ENCODE measurements at regions of chr19 and their contacts with region 1.

Region 1: DNA sequence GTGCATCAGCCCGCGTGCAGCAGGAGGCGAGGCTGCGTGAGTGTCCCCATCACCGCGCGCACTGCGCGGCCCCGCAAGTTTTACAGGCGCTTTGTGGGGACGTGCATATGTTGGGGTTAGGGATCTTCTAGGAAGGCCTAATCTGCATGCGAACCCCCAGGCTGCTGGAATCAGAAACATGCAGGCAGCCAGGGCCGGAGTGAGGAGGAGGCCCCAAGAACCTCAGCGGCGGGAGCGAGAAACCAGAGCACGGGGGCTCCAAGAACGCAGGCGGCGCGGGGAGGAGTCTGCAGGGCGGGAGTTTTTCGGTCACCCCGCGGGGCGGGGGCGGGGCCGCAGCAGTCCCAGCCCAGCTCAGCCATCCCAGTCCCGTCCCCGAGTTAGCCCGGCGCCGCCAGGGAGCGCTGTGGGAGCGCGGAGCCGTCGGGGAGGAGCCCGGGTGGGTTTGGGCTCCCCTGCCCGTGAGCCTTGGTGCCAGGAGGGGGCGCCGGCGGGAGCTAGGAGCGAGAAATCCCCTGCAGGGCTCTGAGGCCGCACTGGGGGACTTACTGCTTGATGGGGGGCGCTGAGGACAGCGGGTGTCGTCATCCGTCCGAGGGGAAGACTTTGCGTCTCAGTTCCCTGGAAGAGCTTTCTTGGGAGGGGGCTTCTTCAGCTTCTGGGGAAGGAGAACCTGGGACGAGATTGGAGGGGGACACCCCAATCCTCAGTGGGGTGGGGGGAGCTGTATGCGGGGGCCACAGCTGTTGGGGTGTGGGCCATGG is 933 bp upstream of the NRTN start:
- DNase-seq: peak; percentile 92 to 94 (median 93)
- ATAC-seq: peak; percentile 73 to 86 (median 79)
- H3K4me3 ChIP-seq: peak overlapping the region; percentile 24 to 44 (median 32)
- H3K27ac ChIP-seq: no peak overlapping the region
- H3K4me1 ChIP-seq: peaks cover 0 to 42% (median 19%) of the 10 kb centered on the region in 4 donors
- H3K27me3 ChIP-seq: no peaks in the 10 kb centered on the region
- CTCF ChIP-seq: peak; percentile 94 to 98 (median 96)
- POLR2A ChIP-seq: no peak

Region 2: DNA sequence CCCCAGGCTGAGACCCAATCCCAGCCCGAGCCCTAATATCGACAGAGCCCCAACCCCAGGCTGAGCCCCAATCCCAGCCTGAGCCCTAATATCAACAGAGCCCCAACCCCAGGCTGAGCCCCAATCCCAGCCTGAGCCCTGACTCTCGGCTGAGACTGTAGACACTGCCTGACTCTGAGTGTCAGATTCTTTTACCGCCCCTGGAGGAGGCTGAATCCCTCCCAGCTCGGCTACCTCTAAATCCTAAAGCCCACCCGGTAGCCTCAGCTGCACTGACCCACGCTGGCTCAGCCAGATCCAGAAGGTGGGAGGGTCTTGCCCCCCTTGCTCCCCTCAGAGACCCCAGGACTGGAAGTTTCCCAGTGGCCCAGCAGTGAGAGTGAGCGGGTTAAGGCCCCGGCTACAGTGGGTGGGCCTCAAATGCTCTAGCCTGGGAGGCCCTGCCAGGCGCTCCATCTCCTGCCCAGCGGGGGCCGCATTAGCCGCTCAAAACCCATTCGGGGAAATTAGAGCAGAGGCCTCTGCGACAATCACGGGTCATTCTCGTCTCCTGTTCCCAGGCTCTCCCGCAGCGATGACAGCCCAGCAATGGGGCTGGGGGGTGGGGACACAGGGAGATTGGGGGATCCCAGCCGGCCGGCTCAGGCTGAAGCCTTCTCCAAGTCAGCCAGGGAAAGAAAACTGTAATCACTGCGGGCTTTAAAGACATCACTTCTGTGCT is 304.9 kb before region 1 on chr19:
- intact Hi-C with region 1: no loop called
- DNase-seq: no peak
- ATAC-seq: no peak
- H3K4me3 ChIP-seq: no peak overlapping the region
- H3K27ac ChIP-seq: no peak overlapping the region
- H3K4me1 ChIP-seq: no peaks in the 10 kb centered on the region
- H3K27me3 ChIP-seq: no peaks in the 10 kb centered on the region
- CTCF ChIP-seq: no peak
- POLR2A ChIP-seq: no peak

Region 3: GRCh38 chr19:5864725-5865486 is 61.0 kb after region 1 on chr19:
- intact Hi-C with region 1: no loop called
- DNase-seq: no peak
- ATAC-seq: no peak
- H3K4me3 ChIP-seq: no peak overlapping the region
- H3K27ac ChIP-seq: no peak overlapping the region
- H3K4me1 ChIP-seq: peaks cover 0 to 5% (median 0%) of the 10 kb centered on the region in 4 donors
- H3K27me3 ChIP-seq: no peaks in the 10 kb centered on the region
- CTCF ChIP-seq: peak in 1 of 4 donors; percentile 22
- POLR2A ChIP-seq: no peak

Region 4: DNA sequence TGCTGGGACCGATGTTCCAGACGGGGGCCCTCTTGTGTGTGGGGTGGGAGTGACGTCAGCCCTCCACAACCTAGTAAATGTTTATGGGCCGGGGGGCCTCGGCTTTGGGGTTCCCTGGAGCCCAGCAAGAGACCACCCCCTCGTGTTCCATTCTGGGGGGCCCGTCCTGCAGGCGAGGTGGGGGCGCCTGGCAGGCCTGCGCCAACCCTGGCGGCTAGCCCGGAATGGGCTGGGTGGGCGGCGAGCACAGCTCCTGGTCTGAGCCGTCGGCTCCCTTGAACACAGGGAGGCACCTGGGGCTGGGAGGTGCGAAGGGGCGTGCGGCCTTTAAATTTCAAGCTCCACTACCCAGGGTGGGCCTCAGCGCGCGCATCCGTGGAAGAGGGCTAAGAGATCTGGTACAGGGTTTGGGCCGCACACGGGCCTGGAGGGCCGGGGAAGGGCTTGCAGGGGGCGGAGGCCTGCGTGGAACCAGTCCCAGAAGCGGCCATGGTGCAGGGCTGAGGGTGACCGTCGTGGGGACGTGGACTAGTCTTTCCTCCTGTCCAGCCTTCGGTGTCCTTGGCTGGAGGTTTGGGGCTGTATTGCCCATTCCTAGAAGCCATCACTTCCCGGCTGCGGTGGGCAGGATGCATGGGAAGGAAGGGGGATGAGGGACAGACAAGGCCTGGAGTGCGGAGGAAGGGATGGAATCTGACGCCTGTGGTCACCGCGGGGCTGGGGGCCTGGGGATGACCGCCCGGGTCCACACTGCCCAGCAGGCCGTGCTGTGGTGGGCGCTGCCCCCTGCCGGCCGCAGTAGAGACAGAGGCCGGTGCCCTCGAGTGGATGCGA is 88.2 kb after region 1 on chr19:
- intact Hi-C with region 1: loop called in 1 of 2 experiments (anchors 5 kb)
- DNase-seq: peak in 1 of 3 donors; percentile 57
- ATAC-seq: peak; percentile 78 to 89 (median 84)
- H3K4me3 ChIP-seq: no peak overlapping the region
- H3K27ac ChIP-seq: no peak overlapping the region
- H3K4me1 ChIP-seq: peaks cover 0 to 8% (median 2%) of the 10 kb centered on the region in 4 donors
- H3K27me3 ChIP-seq: no peaks in the 10 kb centered on the region
- CTCF ChIP-seq: peak; percentile 76 to 88 (median 83)
- POLR2A ChIP-seq: no peak

Region 5: DNA sequence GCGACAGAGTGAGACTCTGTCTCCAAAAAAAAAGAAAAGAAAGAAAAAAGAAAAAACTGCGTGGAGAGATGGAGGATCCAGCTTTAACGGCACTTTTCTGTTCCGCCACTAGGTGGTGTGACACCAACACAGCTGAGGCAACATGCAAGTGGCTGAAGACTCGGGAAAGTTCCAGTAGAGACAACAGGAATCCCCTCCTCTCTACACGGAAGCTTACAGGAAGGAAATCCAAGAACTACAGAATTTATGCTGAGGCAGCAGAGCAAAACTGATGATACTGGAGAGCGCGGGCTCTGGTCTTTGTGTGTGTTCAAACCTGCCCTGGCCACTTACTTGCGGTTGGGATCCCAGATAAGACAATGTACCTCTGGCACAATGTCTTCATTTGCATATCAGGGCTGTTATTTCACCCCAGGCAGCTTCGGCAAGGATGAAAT is 164.1 kb after region 1 on chr19:
- intact Hi-C with region 1: loop called in 1 of 2 experiments (anchors 10 kb)
- DNase-seq: peak in 1 of 3 donors; percentile 76
- ATAC-seq: peak; percentile 82 to 94 (median 86)
- H3K4me3 ChIP-seq: no peak overlapping the region
- H3K27ac ChIP-seq: peak overlapping the region; percentile 73 to 98 (median 93)
- H3K4me1 ChIP-seq: peaks cover 0 to 31% (median 12%) of the 10 kb centered on the region in 4 donors
- H3K27me3 ChIP-seq: no peaks in the 10 kb centered on the region
- CTCF ChIP-seq: peak; percentile 81 to 94 (median 91)
- POLR2A ChIP-seq: no peak

Measured in right lobe of liver (tissue), 6 donors.